WTC11 (cell line): ENCODE measurements at regions of chr11 and their contacts with region 1.

Region 1: DNA sequence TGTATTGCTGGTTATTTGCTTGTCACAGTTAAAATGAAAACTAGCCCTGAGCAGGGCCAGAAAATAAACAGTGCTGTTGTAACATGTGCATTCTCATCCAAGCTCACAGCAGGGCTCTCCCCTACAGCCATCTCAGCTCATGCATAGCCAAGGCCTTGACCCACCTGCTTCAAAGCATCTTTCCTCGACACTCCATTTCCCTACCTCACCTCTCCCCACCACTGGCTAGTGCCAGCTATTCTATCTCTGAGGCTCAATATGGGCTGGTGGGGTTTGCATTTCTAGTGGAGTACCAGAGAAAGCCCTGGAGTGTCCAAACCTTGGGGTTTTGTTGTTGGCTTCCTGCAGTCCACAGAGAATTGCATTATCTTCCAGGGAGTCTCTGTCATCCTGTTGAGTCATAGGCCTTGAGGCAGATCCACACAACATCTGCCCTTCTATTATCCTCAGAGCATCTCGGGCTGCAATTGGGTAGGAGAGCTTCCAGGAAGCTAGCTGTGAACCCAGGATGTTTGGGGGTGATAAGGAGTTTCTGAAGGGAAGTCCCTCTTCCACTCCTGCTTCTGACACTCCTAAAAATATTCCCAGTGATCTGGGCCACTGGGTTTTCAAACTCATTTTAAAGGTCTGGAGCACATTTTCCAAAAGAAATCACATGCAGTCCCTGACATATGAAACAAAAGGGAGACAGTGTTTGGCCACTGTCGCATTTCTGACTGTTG is 36.1 kb upstream of the AMOTL1 start:
- DNase-seq: no peak
- ATAC-seq: peak; percentile 4
- H3K4me3 Mint-ChIP-seq: no peak overlapping the region
- H3K27ac Mint-ChIP-seq: peak overlapping the region; percentile 82
- H3K4me1 Mint-ChIP-seq: peaks cover 61% of the 10 kb centered on the region
- H3K27me3 Mint-ChIP-seq: peaks cover 8% of the 10 kb centered on the region; the same call in 1 of the 2 replicates
- CTCF ChIP-seq: no peak

Region 2: GRCh38 chr11:94656968-94657367 is 75.1 kb before region 1 on chr11:
- CTCF ChIA-PET with region 1: no interaction called
- POLR2A ChIA-PET with region 1: interaction called, 12 read pairs
- DNase-seq: no peak
- ATAC-seq: peak; percentile 51
- H3K4me3 Mint-ChIP-seq: peak overlapping the region; percentile 20
- H3K27ac Mint-ChIP-seq: peak overlapping the region; percentile 89
- H3K4me1 Mint-ChIP-seq: peaks cover 95% of the 10 kb centered on the region
- H3K27me3 Mint-ChIP-seq: no peaks in the 10 kb centered on the region
- CTCF ChIP-seq: no peak